Endothelial cell of umbilical vein (primary cell): ENCODE measurements at regions of chr5 and their contacts with region 1.

Region 1: DNA sequence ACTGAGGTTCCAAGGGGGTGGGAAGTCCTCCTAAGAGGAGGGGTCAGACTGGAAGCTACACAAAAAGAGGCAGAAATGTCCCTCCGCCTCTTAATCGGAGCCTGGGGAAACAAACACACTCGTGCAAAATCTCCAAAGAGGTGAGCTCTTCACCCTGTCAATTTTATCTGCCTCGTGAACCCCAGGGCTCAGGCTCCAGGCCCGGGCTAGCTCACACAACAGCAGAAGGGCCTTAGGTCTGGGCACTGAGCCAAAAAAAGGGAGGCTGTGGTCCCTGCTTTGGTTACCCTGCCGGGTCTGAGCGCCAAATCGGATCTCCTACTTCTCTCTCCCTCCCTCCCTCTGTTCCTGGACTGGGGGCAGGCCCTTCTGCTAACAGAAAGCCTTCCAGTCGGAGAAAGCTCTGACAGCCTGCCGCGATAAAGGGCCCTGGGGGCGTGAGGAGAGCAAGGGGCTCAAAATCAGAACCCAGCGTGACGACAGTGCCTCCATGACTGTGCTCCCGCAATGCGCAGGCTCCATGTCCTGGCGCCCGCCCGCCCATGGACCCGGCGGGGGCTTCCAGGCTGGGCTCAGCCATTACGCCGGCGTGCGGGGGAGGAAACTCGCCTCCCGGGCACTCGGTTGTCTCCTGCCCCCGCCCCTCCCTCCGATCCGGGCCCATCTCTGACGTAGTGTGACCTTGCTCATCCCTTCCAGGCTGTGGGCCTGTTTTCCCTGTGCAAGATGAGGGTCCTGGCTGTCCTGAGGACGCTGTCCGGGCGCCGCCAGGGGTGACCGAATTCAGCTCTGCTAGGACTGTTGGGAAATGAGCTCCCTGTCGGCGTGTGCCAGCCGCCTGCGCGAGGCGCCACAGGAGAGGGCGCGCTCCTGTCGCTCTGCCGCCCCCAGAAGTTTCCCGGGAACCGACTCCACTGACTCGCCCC is 865 bp upstream of the SLC22A4 start:
- DNase-seq: peak; percentile 89
- H3K4me3 ChIP-seq: peak overlapping the region; percentile 37 to 70 (median 53)
- H3K27ac ChIP-seq: peak overlapping the region; percentile 93
- H3K4me1 ChIP-seq: peaks cover 25% of the 10 kb centered on the region
- H3K27me3 ChIP-seq: no peaks in the 10 kb centered on the region
- CTCF ChIP-seq: peak in 1 of 2 donors; percentile 40
- POLR2A ChIP-seq: no peak

Region 2: GRCh38 chr5:132086277-132086794 is 207.0 kb before region 1 on chr5:
- CTCF ChIA-PET with region 1: no interaction called
- POLR2A ChIA-PET with region 1: no interaction called
- dilution Hi-C with region 1: no loop called
- intact Hi-C with region 1: loop called (anchors 1 kb)
- DNase-seq: peak; percentile 99
- H3K4me3 ChIP-seq: no peak overlapping the region
- H3K27ac ChIP-seq: peak overlapping the region; percentile 91
- H3K4me1 ChIP-seq: peaks cover 26% of the 10 kb centered on the region
- H3K27me3 ChIP-seq: no peaks in the 10 kb centered on the region
- CTCF ChIP-seq: no peak
- POLR2A ChIP-seq: no peak

Region 3: GRCh38 chr5:132260714-132261551 is 32.4 kb before region 1 on chr5:
- CTCF ChIA-PET with region 1: interaction called, 6 read pairs
- POLR2A ChIA-PET with region 1: interaction called, 6 read pairs
- dilution Hi-C with region 1: no loop called
- intact Hi-C with region 1: loop called (anchors 1 kb)
- DNase-seq: peak; percentile 91
- H3K4me3 ChIP-seq: no peak overlapping the region
- H3K27ac ChIP-seq: peak overlapping the region; percentile 96
- H3K4me1 ChIP-seq: peaks cover 76% of the 10 kb centered on the region
- H3K27me3 ChIP-seq: no peaks in the 10 kb centered on the region
- CTCF ChIP-seq: no peak
- POLR2A ChIP-seq: no peak

Region 4: DNA sequence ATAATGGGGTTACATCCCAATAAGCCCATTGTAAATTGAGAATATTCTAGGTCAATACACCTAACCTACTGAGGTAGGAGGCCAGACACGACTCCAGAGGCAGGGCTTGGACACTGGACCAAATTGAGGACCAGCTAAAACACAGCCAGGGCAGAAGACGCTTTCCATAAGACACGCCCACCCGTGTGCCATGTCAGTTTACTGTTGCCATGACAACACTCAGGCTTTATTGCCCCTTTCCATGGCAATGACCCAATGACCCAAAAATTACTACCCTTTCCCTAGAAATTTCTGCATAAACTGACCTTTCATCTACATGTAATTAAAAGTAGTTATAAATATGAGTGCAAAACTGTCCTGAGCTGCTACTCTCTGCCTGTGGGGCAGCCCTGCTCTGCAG is 32.4 kb after region 1 on chr5:
- CTCF ChIA-PET with region 1: interaction called, 10 read pairs
- POLR2A ChIA-PET with region 1: no interaction called
- dilution Hi-C with region 1: no loop called
- intact Hi-C with region 1: no loop called
- DNase-seq: no peak
- H3K4me3 ChIP-seq: no peak overlapping the region
- H3K27ac ChIP-seq: no peak overlapping the region
- H3K4me1 ChIP-seq: no peaks in the 10 kb centered on the region
- H3K27me3 ChIP-seq: no peaks in the 10 kb centered on the region
- CTCF ChIP-seq: no peak
- POLR2A ChIP-seq: no peak

Region 5: DNA sequence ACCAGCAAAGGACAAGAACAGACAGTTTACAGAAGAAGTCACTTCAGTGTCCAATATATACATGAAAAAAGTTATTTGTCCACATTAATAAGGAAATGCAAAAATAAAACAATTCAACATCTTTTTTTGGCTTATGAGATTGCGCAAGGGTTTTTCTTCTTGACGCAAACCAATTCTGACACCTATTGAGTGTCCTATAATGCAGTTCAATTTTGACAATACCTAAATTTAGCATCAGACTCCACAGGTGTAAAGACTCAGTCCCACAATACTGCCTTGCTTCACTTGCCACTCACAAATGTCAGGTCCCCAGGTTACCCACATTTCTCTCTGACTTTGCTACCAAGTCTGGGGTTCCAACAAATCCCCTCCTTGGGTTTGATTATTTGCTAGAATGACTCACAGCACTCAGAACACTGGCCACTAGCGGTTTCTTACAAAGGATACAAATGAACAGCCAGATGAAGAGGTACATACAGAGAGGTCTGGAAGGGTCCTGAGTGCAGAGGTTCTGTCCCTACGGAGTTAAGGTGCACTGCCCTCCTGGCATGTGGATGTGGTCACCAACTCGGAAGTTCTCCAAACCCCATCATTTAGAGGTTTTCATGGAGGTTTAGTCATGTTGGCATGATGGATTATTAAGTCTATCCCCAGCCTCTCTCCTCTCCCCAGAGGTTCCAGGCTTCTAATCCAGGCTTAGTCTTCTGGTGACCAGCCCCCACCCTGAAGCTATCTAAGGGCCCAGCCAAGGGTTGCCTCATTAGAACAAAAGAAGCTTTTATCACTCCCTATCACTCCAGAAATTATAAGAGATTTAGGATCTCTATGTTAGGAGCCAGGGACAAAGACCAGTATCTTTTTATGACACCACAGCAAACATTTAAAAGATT is 49.2 kb after region 1 on chr5:
- CTCF ChIA-PET with region 1: no interaction called
- POLR2A ChIA-PET with region 1: no interaction called
- dilution Hi-C with region 1: no loop called
- intact Hi-C with region 1: no loop called
- DNase-seq: no peak
- H3K4me3 ChIP-seq: no peak overlapping the region
- H3K27ac ChIP-seq: no peak overlapping the region
- H3K4me1 ChIP-seq: no peaks in the 10 kb centered on the region
- H3K27me3 ChIP-seq: no peaks in the 10 kb centered on the region
- CTCF ChIP-seq: no peak
- POLR2A ChIP-seq: no peak

Region 6: GRCh38 chr5:132490486-132491367 is 197.4 kb after region 1 on chr5 and contains the start of gene IRF1:
- CTCF ChIA-PET with region 1: no interaction called
- POLR2A ChIA-PET with region 1: interaction called, 3 read pairs
- dilution Hi-C with region 1: no loop called
- intact Hi-C with region 1: loop called (anchors 10 kb)
- DNase-seq: peak; percentile 97
- H3K4me3 ChIP-seq: peak within 1 kb of the TSS; percentile 52 to 90 (median 66)
- H3K27ac ChIP-seq: peak within 1 kb of the TSS; percentile 89
- H3K4me1 ChIP-seq: peaks cover 25% of the 10 kb centered on the region
- H3K27me3 ChIP-seq: no peaks in the 10 kb centered on the region
- CTCF ChIP-seq: peak in 1 of 2 donors; percentile 26
- POLR2A ChIP-seq: peak; percentile 94
- total RNA-seq, gene IRF1: 17.7 and 28.0 TPM in 2 replicates